Activated T-helper 1 cell treated with anti-CD3 and anti-CD28 coated beads, Interleukin-12 subunit alpha, Interleukin-12 subunit beta, Interleukin-2, Interleukin-4 antibody, amounts not matched to agents 30 ng/mL and 10 ng/mL and 1 ng/mL, durations not matched to agents 14 hours and 24 hours and 36 hours (primary cell): ENCODE measurements at regions of chr17 and their contacts with region 1.

Region 1: GRCh38 chr17:73595479-73595878 is 48.8 kb downstream of the SDK2 start:
- DNase-seq: no peak
- H3K4me3 Mint-ChIP-seq: no peak overlapping the region
- H3K27ac Mint-ChIP-seq: no peak overlapping the region
- H3K4me1 Mint-ChIP-seq: peaks cover 37% of the 10 kb centered on the region
- H3K27me3 Mint-ChIP-seq: no peaks in the 10 kb centered on the region

Region 2: GRCh38 chr17:73710095-73710592 is 114.7 kb after region 1 on chr17:
- intact Hi-C with region 1: loop called (anchors 2 kb)
- DNase-seq: peak; percentile 48
- H3K4me3 Mint-ChIP-seq: no peak overlapping the region
- H3K27ac Mint-ChIP-seq: no peak overlapping the region
- H3K4me1 Mint-ChIP-seq: peaks cover 7% of the 10 kb centered on the region
- H3K27me3 Mint-ChIP-seq: peaks cover 6% of the 10 kb centered on the region

Region 3: GRCh38 chr17:73806768-73807167 is 211.3 kb after region 1 on chr17:
- intact Hi-C with region 1: no loop called
- DNase-seq: no peak
- H3K4me3 Mint-ChIP-seq: no peak overlapping the region
- H3K27ac Mint-ChIP-seq: no peak overlapping the region
- H3K4me1 Mint-ChIP-seq: no peaks in the 10 kb centered on the region
- H3K27me3 Mint-ChIP-seq: peaks cover 8% of the 10 kb centered on the region

Region 4: GRCh38 chr17:73820686-73821448 is 225.4 kb after region 1 on chr17:
- intact Hi-C with region 1: no loop called
- DNase-seq: no peak
- H3K4me3 Mint-ChIP-seq: no peak overlapping the region
- H3K27ac Mint-ChIP-seq: no peak overlapping the region
- H3K4me1 Mint-ChIP-seq: no peaks in the 10 kb centered on the region
- H3K27me3 Mint-ChIP-seq: peaks cover 20% of the 10 kb centered on the region